HepG2 (cell line): ENCODE measurements at regions of chr14 and their contacts with region 1.

Region 1: DNA sequence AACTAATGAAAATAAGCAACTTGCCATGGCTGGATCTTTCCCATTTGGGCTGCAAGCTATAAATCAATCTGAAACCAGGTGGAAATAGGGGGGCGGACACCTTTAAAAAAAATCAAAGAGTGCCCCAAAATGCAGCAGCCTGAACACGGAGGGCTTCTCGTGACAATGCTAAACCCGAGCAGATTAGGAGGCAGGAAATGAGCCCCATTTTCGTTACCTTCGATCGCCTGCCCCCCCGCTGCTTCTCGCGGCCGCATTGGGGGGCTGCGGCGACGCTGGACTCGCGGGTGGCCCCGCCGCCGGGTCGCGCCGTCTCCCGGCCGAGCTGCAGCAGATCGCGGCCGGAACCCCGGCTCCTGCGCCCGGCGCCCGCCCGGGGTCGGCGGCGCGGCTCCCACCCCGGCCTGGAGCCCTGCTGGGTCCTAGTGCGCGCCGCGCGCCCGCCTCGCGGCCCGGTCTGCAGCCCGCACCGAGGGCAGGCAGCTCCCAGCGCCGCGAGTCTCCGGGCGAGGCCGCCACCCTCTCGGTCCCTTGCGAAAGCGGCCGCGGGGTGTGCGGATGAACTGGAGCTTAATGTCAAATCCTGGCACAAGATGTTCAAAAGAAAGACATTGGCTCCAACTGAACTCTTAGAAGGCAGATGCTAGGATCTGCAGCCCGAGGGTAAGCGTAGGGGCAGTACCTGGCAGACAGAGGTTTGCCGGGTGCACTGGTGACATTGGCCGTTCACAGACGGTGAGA is 201.9 kb upstream of the FOXN3 start:
- DNase-seq: peak; percentile 12
- ATAC-seq: peak; percentile 93
- H3K4me3 ChIP-seq: peak overlapping the region; percentile 79 to 92 (median 80)
- H3K27ac ChIP-seq: peak overlapping the region; percentile 65
- H3K4me1 ChIP-seq: peaks cover 75% of the 10 kb centered on the region
- H3K27me3 ChIP-seq: no peaks in the 10 kb centered on the region; a peak in 2 of 5 replicates
- CTCF ChIP-seq: no peak
- EP300 ChIP-seq: no peak; a peak in 1 of 4 replicates
- POLR2A ChIP-seq: peak in 1 of 2 experiments; percentile 56; a peak in 2 of 4 replicates
- RAD21 ChIP-seq: peak; percentile 83; the same call in 1 of the 2 replicates

Region 2: GRCh38 chr14:89635615-89636014 is 16.6 kb after region 1 on chr14:
- CTCF ChIA-PET with region 1: no interaction called
- POLR2A ChIA-PET with region 1: no interaction called
- in situ Hi-C with region 1: no loop called
- intact Hi-C with region 1: no loop called
- DNase-seq: no peak
- ATAC-seq: no peak
- H3K4me3 ChIP-seq: no peak overlapping the region
- H3K27ac ChIP-seq: no peak overlapping the region
- H3K4me1 ChIP-seq: peaks cover 17% of the 10 kb centered on the region
- H3K27me3 ChIP-seq: peaks cover 0 to 3% of the 10 kb centered on the region in 2 experiments; a peak in 2 of 5 replicates
- CTCF ChIP-seq: no peak
- EP300 ChIP-seq: no peak
- POLR2A ChIP-seq: no peak
- RAD21 ChIP-seq: no peak

Region 3: GRCh38 chr14:89773644-89774316 is 154.8 kb after region 1 on chr14:
- CTCF ChIA-PET with region 1: no interaction called
- POLR2A ChIA-PET with region 1: interaction called, 3 read pairs
- in situ Hi-C with region 1: no loop called
- intact Hi-C with region 1: loop called (anchors 10 kb)
- DNase-seq: peak; percentile 61
- ATAC-seq: peak; percentile 99
- H3K4me3 ChIP-seq: peak overlapping the region; percentile 51 to 71 (median 56); a peak in 5 of 6 replicates
- H3K27ac ChIP-seq: peak overlapping the region; percentile 57
- H3K4me1 ChIP-seq: peaks cover 46% of the 10 kb centered on the region
- H3K27me3 ChIP-seq: no peaks in the 10 kb centered on the region
- CTCF ChIP-seq: no peak
- EP300 ChIP-seq: 0 out of 4 replicates have a peak, but pooled peaks of 1 of the 2 experiments have one; percentile 23
- POLR2A ChIP-seq: peak in 1 of 2 experiments; percentile 50; a peak in 2 of 4 replicates
- RAD21 ChIP-seq: no peak